ENCODE measurements at regions of chr13 and their contacts with region 1.

Region 1: GRCh38 chr13:68490594-68490993 is 1260.5 kb upstream of the PCDH9 start:
- DNase-seq: no peak
- ATAC-seq: no peak

Region 2: DNA sequence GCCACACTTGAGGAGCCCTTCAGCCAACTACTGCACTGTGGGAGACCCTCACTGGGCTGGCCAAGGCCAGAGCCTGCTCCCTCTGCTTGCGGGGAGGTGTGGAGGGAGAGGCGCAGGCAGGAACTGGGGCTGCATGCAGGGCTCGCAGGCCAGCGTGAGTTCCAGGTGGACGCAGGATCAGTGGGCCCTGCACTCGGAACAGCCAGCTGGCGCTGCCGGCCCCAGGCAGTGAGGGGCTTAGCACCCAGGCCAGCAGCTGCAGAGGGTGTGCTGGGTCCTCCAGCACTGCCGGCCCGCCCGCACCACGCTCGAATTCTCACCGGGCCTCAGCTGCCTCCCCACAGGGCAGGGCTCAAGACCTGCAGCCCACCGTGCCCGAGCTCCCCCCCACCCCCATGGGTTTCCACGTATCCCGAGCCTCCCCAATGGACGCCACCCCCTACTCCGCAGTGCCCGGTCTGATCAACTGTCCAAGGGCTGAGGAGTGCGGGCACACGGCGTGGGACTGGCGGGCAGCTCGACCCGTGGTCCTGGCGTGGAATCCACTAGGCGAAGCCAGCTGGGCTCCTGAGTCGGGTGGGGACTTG is 33.3 kb after region 1 on chr13:
- intact Hi-C with region 1: loop called (anchors 2 kb)
- DNase-seq: no peak
- ATAC-seq: no peak

Measured in sciatic nerve (tissue), 2 donors.